ENCODE measurements at regions of chr18 and their contacts with region 1.

Region 1: GRCh38 chr18:75216212-75216910 is 5.8 kb downstream of the TSHZ1 start:
- DNase-seq: peak in 3 of 14 experiments; percentile 72 to 85 (median 78)
- ATAC-seq: peak; percentile 67
- H3K4me3 ChIP-seq: peak overlapping the region; percentile 11
- H3K4me3 Mint-ChIP-seq: peak overlapping the region; percentile 54
- H3K27ac ChIP-seq: peak overlapping the region; percentile 52 to 73
- H3K27ac Mint-ChIP-seq: peak overlapping the region; percentile 80
- H3K4me1 ChIP-seq: peaks cover 43% of the 10 kb centered on the region
- H3K4me1 Mint-ChIP-seq: peaks cover 88% of the 10 kb centered on the region
- H3K27me3 ChIP-seq: no peaks in the 10 kb centered on the region
- H3K27me3 Mint-ChIP-seq: no peaks in the 10 kb centered on the region
- CTCF ChIP-seq: no peak

Region 2: DNA sequence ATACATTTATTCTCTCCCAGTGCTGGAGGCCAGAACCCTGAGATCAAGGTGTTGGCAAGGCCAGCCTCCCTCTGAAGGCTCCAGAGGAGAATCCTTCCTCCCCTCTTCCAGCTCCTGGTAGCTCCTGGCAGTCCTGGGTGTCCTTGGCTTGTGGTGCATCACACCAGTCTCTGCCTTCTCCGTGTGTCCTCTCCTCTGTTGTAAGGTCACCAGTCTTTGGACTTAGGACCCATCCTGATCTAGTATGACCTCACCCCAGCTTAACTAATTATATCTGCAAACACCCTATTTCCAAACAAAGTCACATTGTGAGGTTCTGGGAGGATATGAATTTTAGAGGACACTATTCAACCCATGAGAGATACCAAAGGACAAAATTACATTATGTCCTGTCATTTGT is 25.3 kb after region 1 on chr18:
- CTCF ChIA-PET with region 1: no interaction called
- POLR2A ChIA-PET with region 1: interaction called, 17 read pairs
- intact Hi-C with region 1: loop called (anchors 2 kb)
- DNase-seq: no peak
- ATAC-seq: no peak
- H3K4me3 ChIP-seq: no peak overlapping the region
- H3K4me3 Mint-ChIP-seq: no peak overlapping the region
- H3K27ac ChIP-seq: no peak overlapping the region
- H3K27ac Mint-ChIP-seq: peak overlapping the region; percentile 24
- H3K4me1 ChIP-seq: peaks cover 35% of the 10 kb centered on the region
- H3K4me1 Mint-ChIP-seq: peaks cover 78% of the 10 kb centered on the region
- H3K27me3 ChIP-seq: no peaks in the 10 kb centered on the region
- H3K27me3 Mint-ChIP-seq: no peaks in the 10 kb centered on the region
- CTCF ChIP-seq: no peak

Region 3: GRCh38 chr18:75247611-75248421 is 31.5 kb after region 1 on chr18:
- CTCF ChIA-PET with region 1: interaction called, 3 read pairs
- POLR2A ChIA-PET with region 1: interaction called, 17 read pairs
- intact Hi-C with region 1: loop called (anchors 2 kb)
- DNase-seq: peak in 3 of 14 experiments; percentile 63 to 82 (median 64)
- ATAC-seq: peak; percentile 61
- H3K4me3 ChIP-seq: peak overlapping the region; percentile 51
- H3K4me3 Mint-ChIP-seq: peak overlapping the region; percentile 85
- H3K27ac ChIP-seq: peak overlapping the region; percentile 66 to 83
- H3K27ac Mint-ChIP-seq: peak overlapping the region; percentile 88
- H3K4me1 ChIP-seq: peaks cover 63% of the 10 kb centered on the region
- H3K4me1 Mint-ChIP-seq: peaks cover 73% of the 10 kb centered on the region
- H3K27me3 ChIP-seq: no peaks in the 10 kb centered on the region
- H3K27me3 Mint-ChIP-seq: no peaks in the 10 kb centered on the region
- CTCF ChIP-seq: no peak

Measured in CD4-positive, alpha-beta T cell (primary cell).